ENCODE measurements at regions of chr11 and their contacts with region 1.

Region 1: DNA sequence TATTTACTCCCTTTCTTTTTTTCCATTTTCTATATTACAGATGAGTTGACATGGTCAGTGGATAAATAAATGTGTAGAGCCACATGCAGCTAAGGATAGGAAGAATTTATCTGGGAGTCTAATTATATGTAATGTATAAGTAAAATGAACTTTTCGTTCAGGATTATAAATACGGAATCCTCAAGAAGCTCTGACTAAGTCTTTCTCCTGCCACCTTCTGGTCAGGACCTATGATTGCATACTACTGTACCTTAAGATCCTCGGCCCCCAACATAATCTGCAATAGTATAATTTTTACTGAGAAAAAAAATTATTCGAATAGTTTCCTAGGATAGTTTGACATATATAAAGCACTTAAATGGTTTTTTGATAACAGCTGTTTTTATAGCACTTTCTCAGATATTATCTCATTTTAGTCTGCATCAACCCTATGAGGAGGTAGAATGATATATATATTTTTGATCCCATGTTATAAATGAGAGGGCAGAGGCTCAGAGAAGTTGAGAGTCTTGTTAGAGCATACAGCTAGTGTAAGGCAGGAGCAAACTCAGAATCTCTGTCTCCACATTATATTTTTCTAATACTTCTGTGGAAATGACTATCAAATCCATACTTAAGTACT is 36.1 kb downstream of the CCDC90B start:
- DNase-seq: no peak
- H3K4me3 Mint-ChIP-seq: no peak overlapping the region
- H3K27ac Mint-ChIP-seq: no peak overlapping the region
- H3K4me1 Mint-ChIP-seq: peaks cover 7% of the 10 kb centered on the region
- H3K27me3 Mint-ChIP-seq: no peaks in the 10 kb centered on the region

Region 2: DNA sequence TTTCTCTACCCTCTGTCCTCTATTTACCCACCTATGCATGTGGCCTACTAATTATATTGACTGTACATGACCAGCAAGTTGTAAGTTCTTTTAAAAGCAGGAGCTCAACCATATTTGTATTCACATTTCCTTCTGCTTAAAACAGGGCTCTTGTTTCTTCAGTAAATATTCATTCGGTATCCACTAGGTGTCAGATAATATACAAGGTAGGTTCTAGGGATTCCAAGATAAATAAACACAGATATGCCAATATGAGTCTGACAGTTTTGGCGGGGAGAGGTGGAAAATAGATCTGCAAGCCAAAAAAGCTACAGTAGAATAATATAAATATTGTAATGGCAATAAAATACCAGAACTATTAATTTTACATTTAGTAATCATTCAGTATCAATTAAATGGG is 163.0 kb before region 1 on chr11:
- CTCF ChIA-PET with region 1: interaction called, 17 read pairs
- DNase-seq: no peak
- H3K4me3 Mint-ChIP-seq: no peak overlapping the region
- H3K27ac Mint-ChIP-seq: no peak overlapping the region
- H3K4me1 Mint-ChIP-seq: peaks cover 4% of the 10 kb centered on the region
- H3K27me3 Mint-ChIP-seq: no peaks in the 10 kb centered on the region

Region 3: GRCh38 chr11:83122766-83123165 is 127.3 kb before region 1 on chr11:
- CTCF ChIA-PET with region 1: no interaction called
- DNase-seq: no peak
- H3K4me3 Mint-ChIP-seq: no peak overlapping the region
- H3K27ac Mint-ChIP-seq: peak overlapping the region; percentile 29
- H3K4me1 Mint-ChIP-seq: peaks cover 44% of the 10 kb centered on the region
- H3K27me3 Mint-ChIP-seq: peaks cover 5% of the 10 kb centered on the region

Region 4: GRCh38 chr11:83306200-83307080 is 56.4 kb after region 1 on chr11:
- CTCF ChIA-PET with region 1: no interaction called
- DNase-seq: no peak
- H3K4me3 Mint-ChIP-seq: no peak overlapping the region
- H3K27ac Mint-ChIP-seq: no peak overlapping the region
- H3K4me1 Mint-ChIP-seq: no peaks in the 10 kb centered on the region
- H3K27me3 Mint-ChIP-seq: peaks cover 15% of the 10 kb centered on the region